Right cardiac atrium (tissue), 5 donors: ENCODE measurements at regions of chr11 and their contacts with region 1.

Region 1: DNA sequence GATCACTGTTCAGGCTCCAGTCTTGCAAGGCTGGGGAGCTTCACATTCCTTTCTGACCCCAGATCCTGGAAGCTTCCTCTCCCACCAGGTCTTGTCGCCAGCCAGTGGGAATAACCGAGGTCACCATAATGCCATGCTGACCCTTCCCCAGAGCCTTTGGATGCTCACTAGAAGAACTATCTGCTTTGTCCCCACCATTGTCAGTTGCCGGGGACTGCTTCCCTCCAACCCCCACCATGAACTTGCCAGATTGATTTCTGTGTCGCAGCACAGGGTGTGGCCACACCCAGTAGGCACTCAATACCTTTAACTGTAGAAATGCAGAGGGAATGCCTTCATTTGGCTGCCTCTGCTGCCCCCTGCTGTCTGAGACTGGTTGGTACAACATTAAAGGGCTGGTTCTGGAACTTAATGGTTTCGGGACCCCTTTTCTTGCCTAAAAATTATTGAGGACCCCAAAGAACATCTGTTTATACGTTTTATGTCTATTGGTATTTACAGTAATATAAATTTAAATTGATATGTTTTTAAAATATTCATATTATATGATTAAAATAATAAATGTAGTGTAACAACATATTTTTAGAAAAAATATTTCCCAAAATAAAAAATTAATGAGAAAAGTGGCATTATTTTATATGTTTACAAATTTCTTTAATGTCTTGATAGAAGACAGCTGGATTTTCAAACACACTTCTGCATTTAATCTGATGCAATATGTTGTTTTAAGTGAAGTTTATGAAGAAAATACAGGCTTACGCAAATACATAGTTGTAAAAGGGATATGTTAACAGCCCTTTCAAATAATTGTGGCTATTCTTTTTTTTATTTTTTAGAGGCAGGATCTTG is 6.7 kb upstream of the GDPD5 start:
- DNase-seq: peak; percentile 68 to 81 (median 76)
- ATAC-seq: peak; percentile 42 to 51
- H3K4me3 ChIP-seq: no peak overlapping the region
- H3K27ac ChIP-seq: no peak overlapping the region
- H3K4me1 ChIP-seq: no peaks in the 10 kb centered on the region
- H3K27me3 ChIP-seq: no peaks in the 10 kb centered on the region

Region 2: GRCh38 chr11:74739546-74740270 is 792.7 kb before region 1 on chr11:
- intact Hi-C with region 1: no loop called
- DNase-seq: peak; percentile 39 to 78 (median 68)
- ATAC-seq: peak; percentile 88 to 90
- H3K4me3 ChIP-seq: no peak overlapping the region
- H3K27ac ChIP-seq: no peak overlapping the region
- H3K4me1 ChIP-seq: no peaks in the 10 kb centered on the region
- H3K27me3 ChIP-seq: no peaks in the 10 kb centered on the region

Region 3: DNA sequence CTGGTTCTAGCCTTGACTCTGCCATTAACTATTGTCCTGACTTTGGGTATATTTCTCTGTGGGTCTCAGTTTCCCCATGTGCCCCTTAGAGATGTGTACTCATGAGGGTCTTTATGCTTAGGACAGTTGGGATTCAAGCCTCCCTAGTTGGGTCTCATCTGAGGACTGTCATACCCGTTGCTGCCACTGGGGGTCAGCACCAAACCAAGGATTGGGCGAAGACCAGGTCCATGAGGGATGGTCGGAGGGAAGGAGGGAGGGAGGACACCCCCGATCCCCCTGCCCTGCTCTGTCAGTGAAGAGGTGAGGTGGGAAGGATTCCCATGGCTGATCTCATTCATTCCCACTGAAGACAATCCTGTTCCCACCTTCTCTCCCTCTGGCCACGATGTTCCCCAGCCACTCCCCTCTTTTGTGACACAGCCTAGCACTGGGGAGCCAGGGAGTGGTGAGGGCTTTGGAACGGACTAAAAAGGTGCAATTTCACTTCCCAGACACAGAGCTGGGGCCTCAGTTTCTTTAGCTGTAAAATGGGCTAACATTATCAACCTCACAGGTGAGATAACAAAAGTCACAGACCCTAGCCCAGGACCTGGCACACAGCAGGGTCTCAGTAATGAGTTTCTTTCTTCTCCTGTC is 87.0 kb before region 1 on chr11:
- intact Hi-C with region 1: loop called (anchors 2 to 5 kb)
- DNase-seq: peak; percentile 67 to 88 (median 84)
- ATAC-seq: peak; percentile 54 to 72
- H3K4me3 ChIP-seq: no peak overlapping the region
- H3K27ac ChIP-seq: no peak overlapping the region
- H3K4me1 ChIP-seq: no peaks in the 10 kb centered on the region
- H3K27me3 ChIP-seq: no peaks in the 10 kb centered on the region